Activated naive CD4-positive, alpha-beta T cell treated with anti-CD3 and anti-CD28 coated beads for 36 hours (primary cell): ENCODE measurements at regions of chr4 and their contacts with region 1.

Region 1: DNA sequence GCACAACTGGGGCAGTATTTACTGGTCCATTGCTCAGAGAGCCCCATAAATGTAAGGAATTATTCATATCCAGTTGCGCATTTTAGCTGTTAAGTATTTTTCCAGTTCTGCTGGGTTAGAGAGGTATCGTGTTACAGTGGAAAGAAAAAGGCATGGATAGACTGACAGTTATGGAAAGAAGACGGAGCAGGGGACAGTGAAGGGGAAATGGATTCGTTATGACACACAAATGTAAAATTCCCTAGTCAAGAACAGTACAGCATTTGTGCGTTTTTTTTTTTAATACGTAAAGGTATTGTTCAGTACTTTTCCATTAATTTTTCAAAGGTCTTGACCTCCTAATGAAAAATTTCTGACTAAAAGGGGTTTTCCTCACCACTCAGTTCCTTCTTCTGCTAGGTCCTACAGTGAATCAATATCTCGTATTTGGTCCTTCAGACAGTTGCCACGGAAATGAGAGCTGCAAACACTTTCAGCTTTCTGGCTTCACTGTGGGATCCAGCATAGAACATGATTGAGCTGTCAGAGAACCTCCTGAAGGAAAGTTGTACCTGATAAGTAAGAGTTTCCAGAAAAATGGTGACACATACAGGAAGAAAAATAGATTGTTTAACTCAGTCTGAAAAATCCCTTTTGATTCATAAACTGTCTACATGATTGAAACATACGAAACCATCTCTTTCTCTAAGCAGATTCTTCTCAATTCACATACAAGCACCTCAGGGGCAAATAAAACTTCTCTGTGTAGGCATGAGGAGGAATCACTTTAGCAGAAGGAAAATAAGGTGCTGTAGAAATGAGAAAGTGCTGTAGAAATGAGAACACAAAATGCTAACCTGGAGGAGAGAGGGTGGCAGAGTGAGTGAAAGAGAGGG is 21.8 kb upstream of the BBS12 start:
- DNase-seq: peak; percentile 79
- H3K4me3 Mint-ChIP-seq: peak overlapping the region; percentile 54
- H3K27ac Mint-ChIP-seq: peak overlapping the region; percentile 96
- H3K4me1 Mint-ChIP-seq: peaks cover 80% of the 10 kb centered on the region
- H3K27me3 Mint-ChIP-seq: no peaks in the 10 kb centered on the region

Region 2: GRCh38 chr4:121950212-121950679 is 760.4 kb before region 1 on chr4:
- CTCF ChIA-PET with region 1: no interaction called
- intact Hi-C with region 1: loop called (anchors 1 kb)
- DNase-seq: peak; percentile 92
- H3K4me3 Mint-ChIP-seq: peak overlapping the region; percentile 86
- H3K27ac Mint-ChIP-seq: no peak overlapping the region
- H3K4me1 Mint-ChIP-seq: peaks cover 5% of the 10 kb centered on the region
- H3K27me3 Mint-ChIP-seq: peaks cover 32% of the 10 kb centered on the region

Region 3: DNA sequence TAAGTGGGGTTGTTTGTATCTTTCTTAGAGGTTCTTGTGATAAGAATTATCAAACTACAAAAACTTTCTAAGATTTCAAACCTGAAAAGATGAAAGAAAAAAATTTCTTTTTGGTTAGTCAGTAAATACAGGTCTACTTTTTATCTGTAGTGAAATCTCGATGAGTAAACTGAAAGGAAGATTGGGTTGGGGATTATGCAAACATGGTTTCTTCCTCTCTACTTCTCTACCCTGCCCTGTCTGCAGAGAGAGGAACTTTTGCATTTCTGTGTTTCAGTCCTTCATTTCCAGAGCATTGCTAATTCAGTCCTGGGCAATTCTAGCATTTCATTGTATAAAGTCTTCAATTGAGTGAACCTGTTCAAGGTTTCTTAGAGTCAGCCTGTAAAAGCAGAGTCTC is 202.6 kb before region 1 on chr4:
- CTCF ChIA-PET with region 1: no interaction called
- intact Hi-C with region 1: loop called (anchors 2 kb)
- DNase-seq: no peak
- H3K4me3 Mint-ChIP-seq: peak overlapping the region; percentile 53
- H3K27ac Mint-ChIP-seq: peak overlapping the region; percentile 98
- H3K4me1 Mint-ChIP-seq: peaks cover 89% of the 10 kb centered on the region
- H3K27me3 Mint-ChIP-seq: no peaks in the 10 kb centered on the region

Region 4: GRCh38 chr4:122548452-122548851 is 162.2 kb before region 1 on chr4:
- CTCF ChIA-PET with region 1: no interaction called
- intact Hi-C with region 1: loop called (anchors 2 kb)
- DNase-seq: peak; percentile 64
- H3K4me3 Mint-ChIP-seq: peak overlapping the region; percentile 77
- H3K27ac Mint-ChIP-seq: peak overlapping the region; percentile 96
- H3K4me1 Mint-ChIP-seq: peaks cover 93% of the 10 kb centered on the region
- H3K27me3 Mint-ChIP-seq: no peaks in the 10 kb centered on the region

Region 5: DNA sequence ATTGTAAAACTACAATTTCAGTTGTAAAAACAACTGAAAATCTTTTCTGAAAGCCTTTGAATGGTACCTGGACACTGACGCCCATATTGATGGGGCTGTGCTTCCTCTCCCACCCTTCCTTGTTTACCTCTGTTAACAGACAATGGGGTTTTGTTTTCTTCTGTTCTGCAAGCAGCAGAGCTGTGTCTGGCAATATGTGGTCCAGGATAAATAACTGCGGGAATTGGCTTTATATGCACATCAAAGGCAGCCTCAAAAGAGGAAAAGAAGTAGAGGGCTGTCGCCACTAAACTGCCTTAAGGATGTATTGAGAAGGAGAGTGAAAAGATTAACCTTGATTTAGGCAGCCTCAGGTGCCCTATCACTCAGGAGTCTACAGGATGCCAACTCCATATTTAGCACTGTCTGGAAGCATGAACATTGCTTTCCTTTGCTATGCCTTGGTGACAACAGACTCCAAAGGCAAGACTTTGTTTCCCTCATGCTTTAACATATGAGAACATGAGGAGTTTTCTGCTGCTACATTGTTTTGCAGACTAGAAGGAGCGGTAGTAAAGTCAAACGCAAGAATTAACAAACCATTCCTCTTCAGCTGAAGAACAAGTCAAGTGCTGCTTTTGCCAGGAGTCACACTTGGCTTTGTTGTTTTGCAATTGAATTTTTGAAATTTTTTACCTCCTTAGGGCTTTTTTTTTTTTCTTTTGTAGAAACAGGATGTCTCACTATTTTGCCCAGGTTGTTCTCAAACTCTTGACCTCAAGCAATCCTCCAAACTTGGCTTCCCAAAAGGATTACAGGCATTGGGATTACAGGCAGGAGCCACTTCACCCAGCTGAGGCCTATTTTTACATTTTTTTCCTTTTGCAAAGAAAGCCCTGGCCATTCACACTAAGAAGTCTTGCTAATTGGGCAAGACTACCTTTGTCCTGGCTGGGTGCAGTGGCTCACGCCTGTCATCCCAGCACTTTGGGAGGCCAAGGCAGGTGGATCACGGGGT is 92.8 kb before region 1 on chr4:
- CTCF ChIA-PET with region 1: interaction called, 4 read pairs
- intact Hi-C with region 1: loop called (anchors 1 kb)
- DNase-seq: no peak
- H3K4me3 Mint-ChIP-seq: peak overlapping the region; percentile 88
- H3K27ac Mint-ChIP-seq: peak overlapping the region; percentile 97
- H3K4me1 Mint-ChIP-seq: peaks cover 70% of the 10 kb centered on the region
- H3K27me3 Mint-ChIP-seq: no peaks in the 10 kb centered on the region

Region 6: GRCh38 chr4:122700178-122700725 is 10.4 kb before region 1 on chr4:
- CTCF ChIA-PET with region 1: no interaction called
- intact Hi-C with region 1: loop called (anchors 1 kb)
- DNase-seq: no peak
- H3K4me3 Mint-ChIP-seq: peak overlapping the region; percentile 69
- H3K27ac Mint-ChIP-seq: peak overlapping the region; percentile 99
- H3K4me1 Mint-ChIP-seq: peaks cover 56% of the 10 kb centered on the region
- H3K27me3 Mint-ChIP-seq: peaks cover 4% of the 10 kb centered on the region